ENCODE measurements at regions of chr16 and their contacts with region 1.

Region 1: DNA sequence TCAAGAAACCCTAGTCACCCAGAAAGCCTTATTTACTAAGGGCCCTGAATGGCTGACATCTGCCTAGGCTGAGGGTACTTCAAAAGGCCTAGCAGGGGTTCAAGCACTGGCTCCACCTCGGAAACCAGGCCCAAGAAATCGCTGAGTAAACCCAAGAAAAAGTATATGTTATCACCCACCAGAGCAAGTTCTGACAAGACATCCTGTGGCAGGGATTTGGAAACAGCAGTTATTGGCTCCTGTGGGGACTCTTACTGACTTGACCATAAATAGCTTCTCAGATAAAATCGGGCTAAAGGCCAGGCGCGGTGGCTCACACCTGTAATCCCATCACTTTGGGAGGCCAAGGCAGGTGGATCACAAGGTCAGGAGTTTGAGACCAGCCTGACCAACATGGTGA is 12.2 kb downstream of the ATP6V0D1 start:
- DNase-seq: no peak
- ATAC-seq: no peak
- H3K4me3 ChIP-seq: no peak overlapping the region
- H3K27ac ChIP-seq: no peak overlapping the region
- H3K4me1 ChIP-seq: peaks cover 57% of the 10 kb centered on the region
- H3K27me3 ChIP-seq: no peaks in the 10 kb centered on the region
- CTCF ChIP-seq: no peak
- POLR2A ChIP-seq: no peak

Region 2: DNA sequence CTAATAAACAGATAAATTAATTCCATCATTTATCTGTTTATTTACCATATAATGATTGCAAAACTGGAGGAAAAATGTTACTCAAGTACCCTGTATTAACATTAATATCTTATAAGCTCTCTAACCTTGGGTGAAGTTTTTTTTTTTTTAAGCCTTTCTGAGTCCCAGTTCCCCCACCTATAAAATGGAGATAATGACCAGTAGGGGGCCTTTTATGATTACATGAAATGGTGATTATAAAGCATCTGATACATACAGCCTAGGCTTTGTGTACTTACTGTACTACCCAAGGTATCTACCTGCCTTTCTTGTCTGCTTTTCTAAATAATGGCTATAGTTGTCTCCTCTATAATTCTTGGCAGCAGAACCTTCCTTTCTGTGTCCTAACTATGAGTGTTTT is 119.6 kb before region 1 on chr16:
- intact Hi-C with region 1: no loop called
- DNase-seq: no peak
- ATAC-seq: no peak
- H3K4me3 ChIP-seq: no peak overlapping the region
- H3K27ac ChIP-seq: no peak overlapping the region
- H3K4me1 ChIP-seq: no peaks in the 10 kb centered on the region
- H3K27me3 ChIP-seq: no peaks in the 10 kb centered on the region
- CTCF ChIP-seq: peak in 5 of 7 experiments; percentile 15 to 36 (median 27)
- POLR2A ChIP-seq: no peak

Region 3: GRCh38 chr16:67428146-67428731 is 40.5 kb before region 1 on chr16:
- intact Hi-C with region 1: loop called (anchors 5 kb)
- DNase-seq: peak; percentile 82 to 87 (median 86)
- ATAC-seq: peak; percentile 53
- H3K4me3 ChIP-seq: no peak overlapping the region
- H3K27ac ChIP-seq: no peak overlapping the region
- H3K4me1 ChIP-seq: peaks cover 55% of the 10 kb centered on the region
- H3K27me3 ChIP-seq: no peaks in the 10 kb centered on the region
- CTCF ChIP-seq: peak; percentile 78 to 93 (median 90)
- POLR2A ChIP-seq: no peak

Region 4: DNA sequence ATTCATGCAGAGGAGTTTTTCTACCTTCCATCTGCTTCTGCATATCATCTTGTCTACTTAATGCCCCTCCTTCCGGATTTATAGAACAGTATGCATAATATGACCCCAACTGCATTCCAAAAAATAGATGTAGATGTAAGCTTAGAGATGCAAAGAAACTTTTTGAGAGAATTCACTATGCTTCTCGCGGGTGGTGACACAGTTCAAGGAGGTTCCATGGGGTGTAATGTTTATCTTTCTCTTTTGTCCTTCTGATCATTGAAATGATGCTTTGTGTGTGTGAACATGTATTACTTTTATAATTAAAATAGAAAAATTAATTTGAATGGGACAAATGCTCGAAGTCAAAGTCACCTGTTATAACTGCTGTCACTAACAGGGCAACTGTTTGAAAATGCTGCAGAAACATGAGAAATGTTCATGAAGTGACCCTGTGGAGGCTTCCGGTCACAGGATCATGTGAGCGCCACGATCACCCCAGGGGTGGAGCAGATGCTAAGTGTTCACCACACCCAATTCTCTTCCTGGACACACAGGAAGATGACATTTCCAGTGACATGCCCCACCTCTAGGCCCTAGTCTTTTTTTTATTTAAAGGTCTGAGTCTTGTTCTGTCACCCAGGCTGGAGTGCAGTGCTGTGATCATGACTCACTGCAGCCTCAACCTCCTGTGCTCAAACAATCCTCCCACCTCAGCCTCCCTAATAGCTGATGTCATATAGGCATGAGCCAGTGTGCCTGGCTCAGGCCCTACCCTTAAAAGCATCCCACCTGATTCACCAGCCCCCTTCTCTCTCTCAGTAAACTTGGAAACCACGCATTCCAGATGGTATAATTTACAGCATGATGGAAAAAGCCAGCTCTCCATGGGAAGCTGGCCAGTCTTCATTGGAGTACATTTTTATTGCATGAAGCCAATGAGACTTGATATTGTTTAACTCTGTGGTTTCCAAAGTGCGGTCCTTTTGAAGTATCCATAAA is 35.6 kb after region 1 on chr16:
- intact Hi-C with region 1: no loop called
- DNase-seq: peak in 1 of 4 donors; percentile 52
- ATAC-seq: no peak
- H3K4me3 ChIP-seq: no peak overlapping the region
- H3K27ac ChIP-seq: peak overlapping the region in 1 of 4 donors; percentile 19
- H3K4me1 ChIP-seq: no peaks in the 10 kb centered on the region
- H3K27me3 ChIP-seq: no peaks in the 10 kb centered on the region
- CTCF ChIP-seq: no peak
- POLR2A ChIP-seq: no peak